AG04449 (cell line): ENCODE measurements at regions of chr1 and their contacts with region 1.

Region 1: GRCh38 chr1:27300341-27301051 is 21.5 kb upstream of the TMEM222 start:
- DNase-seq: peak; percentile 62
- H3K4me3 ChIP-seq: peak overlapping the region; percentile 29
- CTCF ChIP-seq: peak; percentile 99

Region 2: GRCh38 chr1:27097484-27097917 is 203.0 kb before region 1 on chr1:
- CTCF ChIA-PET with region 1: interaction called, 254 read pairs
- POLR2A ChIA-PET with region 1: no interaction called
- DNase-seq: peak; percentile 12
- H3K4me3 ChIP-seq: no peak overlapping the region
- CTCF ChIP-seq: peak; percentile 97

Region 3: DNA sequence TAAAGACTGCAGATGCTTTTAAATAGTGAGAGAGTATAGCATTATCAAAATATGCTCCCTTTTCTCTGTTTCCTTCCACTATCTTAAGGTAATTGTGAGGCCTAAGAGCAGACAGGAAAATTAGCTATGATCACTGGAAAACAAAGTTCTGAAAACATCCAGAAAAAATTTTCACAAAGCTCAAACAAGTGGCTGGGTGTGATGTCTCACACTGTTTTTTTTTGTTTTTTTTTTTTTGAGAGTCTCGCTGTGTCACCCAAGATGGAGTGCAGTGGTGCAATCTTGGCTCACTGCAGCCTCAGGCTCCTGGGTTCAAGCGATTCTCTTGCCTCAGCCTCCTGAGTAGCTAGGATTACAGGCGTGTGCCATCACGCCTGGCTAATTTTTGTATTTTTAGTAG is 58.8 kb before region 1 on chr1:
- CTCF ChIA-PET with region 1: interaction called, 22 read pairs
- POLR2A ChIA-PET with region 1: no interaction called
- DNase-seq: no peak
- H3K4me3 ChIP-seq: no peak overlapping the region
- CTCF ChIP-seq: no peak

Region 4: GRCh38 chr1:27349784-27350662 is 49.5 kb after region 1 on chr1:
- CTCF ChIA-PET with region 1: interaction called, 95 read pairs
- POLR2A ChIA-PET with region 1: no interaction called
- DNase-seq: no peak
- H3K4me3 ChIP-seq: peak overlapping the region; percentile 49
- CTCF ChIP-seq: no peak

Region 5: GRCh38 chr1:27416387-27417111 is 116.1 kb after region 1 on chr1:
- CTCF ChIA-PET with region 1: interaction called, 10 read pairs
- POLR2A ChIA-PET with region 1: no interaction called
- DNase-seq: no peak
- H3K4me3 ChIP-seq: no peak overlapping the region
- CTCF ChIP-seq: peak; percentile 61

Region 6: DNA sequence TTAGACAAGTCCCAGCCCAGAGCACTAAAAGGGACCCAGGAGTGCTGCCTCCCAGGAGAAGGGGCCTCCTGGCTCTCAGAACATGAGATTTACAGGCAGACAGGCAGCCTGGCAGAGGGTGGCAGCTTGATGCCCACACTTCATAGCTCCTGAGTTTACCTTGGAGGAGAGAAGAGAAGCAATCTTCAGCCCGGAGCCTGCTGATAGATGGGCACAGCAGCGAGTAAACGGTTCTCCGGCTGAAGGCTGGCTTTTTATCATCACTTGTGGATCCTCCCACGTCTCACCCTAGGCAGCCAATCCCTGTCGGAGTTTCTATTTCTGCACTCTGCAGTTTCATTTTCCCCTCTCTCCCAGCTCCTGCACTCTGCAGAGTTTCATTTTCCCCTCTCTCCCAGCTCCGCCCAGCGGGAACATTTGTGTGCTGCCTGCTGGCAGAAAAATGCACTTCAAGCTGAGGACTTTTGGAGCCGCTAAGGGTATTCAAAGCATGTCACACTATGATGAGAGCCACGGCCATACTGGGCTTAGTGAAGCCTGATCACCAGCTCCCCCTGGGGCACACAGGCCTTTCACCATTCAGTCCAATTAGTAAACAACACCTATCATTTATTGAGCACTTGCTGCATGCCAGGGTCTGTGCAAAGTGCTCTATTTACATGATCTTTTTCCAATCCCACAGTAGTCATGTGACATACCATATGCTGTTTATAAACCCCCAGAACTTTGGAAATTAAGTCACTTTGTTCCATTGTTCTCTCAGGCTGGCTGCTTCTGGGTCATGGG is 371.7 kb after region 1 on chr1 and contains the start of gene IFI6:
- CTCF ChIA-PET with region 1: interaction called, 11 read pairs
- POLR2A ChIA-PET with region 1: no interaction called
- DNase-seq: peak; percentile 82
- H3K4me3 ChIP-seq: peak within 1 kb of the TSS; percentile 61
- CTCF ChIP-seq: peak; percentile 32